Activated naive CD4-positive, alpha-beta T cell treated with anti-CD3 and anti-CD28 coated beads for 36 hours (primary cell): ENCODE measurements at regions of chr9 and their contacts with region 1.

Region 1: GRCh38 chr9:78369639-78370219 is 72.8 kb downstream of the PSAT1 start:
- DNase-seq: peak; percentile 68
- H3K4me3 Mint-ChIP-seq: no peak overlapping the region
- H3K27ac Mint-ChIP-seq: no peak overlapping the region
- H3K4me1 Mint-ChIP-seq: no peaks in the 10 kb centered on the region
- H3K27me3 Mint-ChIP-seq: peaks cover 4% of the 10 kb centered on the region

Region 2: DNA sequence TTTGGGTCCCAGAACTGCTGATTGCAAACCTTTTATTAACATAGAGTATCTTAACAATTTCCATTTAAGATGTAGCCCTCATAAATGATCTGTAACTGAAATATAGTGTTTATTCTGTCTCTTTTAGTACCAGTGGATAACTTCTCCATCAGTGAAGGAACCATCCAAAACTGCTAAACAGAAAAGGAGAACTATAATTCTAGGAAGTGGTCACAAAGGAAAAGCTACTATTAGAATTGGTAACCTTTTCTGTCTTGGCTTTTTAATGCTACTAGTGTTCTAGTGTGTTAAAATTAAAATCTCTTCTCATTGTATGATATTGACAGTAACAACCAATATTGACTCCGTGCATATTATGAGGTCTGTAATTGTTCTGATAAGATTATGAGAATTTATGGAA is 121.1 kb before region 1 on chr9:
- CTCF ChIA-PET with region 1: no interaction called
- intact Hi-C with region 1: no loop called
- DNase-seq: no peak
- H3K4me3 Mint-ChIP-seq: no peak overlapping the region
- H3K27ac Mint-ChIP-seq: no peak overlapping the region
- H3K4me1 Mint-ChIP-seq: no peaks in the 10 kb centered on the region
- H3K27me3 Mint-ChIP-seq: no peaks in the 10 kb centered on the region

Region 3: DNA sequence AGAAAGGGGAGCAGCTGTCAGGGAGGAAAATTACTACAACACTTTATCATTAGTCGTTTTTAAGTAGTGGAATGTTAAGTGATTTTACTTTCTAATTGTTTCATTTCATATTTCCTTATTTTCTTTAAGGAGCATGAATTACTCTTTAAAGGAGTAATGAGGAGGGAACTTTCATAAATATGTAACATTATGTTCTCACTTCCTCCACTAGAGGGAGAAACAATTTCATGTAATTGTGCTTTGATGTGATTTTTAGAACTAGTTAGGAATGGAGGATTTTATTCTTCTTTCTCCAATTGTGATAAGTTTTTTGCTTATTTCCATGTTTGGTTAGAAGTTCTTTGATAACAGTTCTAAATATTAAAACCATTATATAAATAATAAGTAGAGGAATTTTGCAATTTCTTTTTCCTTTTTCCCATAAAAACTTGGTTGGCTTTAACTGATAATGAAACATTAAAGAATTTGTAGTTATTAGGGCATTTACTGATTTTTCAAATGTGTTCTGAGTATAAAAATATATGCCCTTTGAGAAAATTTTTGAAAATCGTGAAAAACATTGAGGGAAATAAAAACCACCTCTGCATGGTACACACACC is 108.2 kb before region 1 on chr9:
- CTCF ChIA-PET with region 1: interaction called, 24 read pairs
- intact Hi-C with region 1: loop called (anchors 1 kb)
- DNase-seq: no peak
- H3K4me3 Mint-ChIP-seq: no peak overlapping the region
- H3K27ac Mint-ChIP-seq: no peak overlapping the region
- H3K4me1 Mint-ChIP-seq: no peaks in the 10 kb centered on the region
- H3K27me3 Mint-ChIP-seq: no peaks in the 10 kb centered on the region

Region 4: DNA sequence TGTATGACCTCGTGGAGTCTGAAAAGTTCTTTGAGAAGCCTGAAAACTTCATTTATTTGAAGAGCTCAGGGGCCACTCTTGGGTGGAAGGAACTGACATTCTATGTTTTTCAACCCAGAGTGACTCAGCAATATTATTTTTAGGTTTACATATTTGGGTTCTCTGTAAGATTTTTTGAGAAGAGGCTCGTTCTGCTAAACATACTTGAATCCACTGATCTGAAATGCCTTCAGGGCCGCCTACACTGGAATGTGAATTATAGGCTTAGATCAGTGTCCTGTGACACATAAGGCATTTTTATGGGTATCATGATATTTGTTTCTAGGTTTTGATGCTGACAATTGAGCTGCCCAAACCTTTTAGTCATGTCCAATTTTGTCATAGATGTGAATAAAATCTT is 13.4 kb after region 1 on chr9:
- CTCF ChIA-PET with region 1: interaction called, 19 read pairs
- intact Hi-C with region 1: no loop called
- DNase-seq: no peak
- H3K4me3 Mint-ChIP-seq: no peak overlapping the region
- H3K27ac Mint-ChIP-seq: no peak overlapping the region
- H3K4me1 Mint-ChIP-seq: no peaks in the 10 kb centered on the region
- H3K27me3 Mint-ChIP-seq: peaks cover 5% of the 10 kb centered on the region